Activated CD4-positive, alpha-beta T cell treated with anti-CD3 and anti-CD28 coated beads for 36 hours (primary cell): ENCODE measurements at regions of chr19 and their contacts with region 1.

Region 1: DNA sequence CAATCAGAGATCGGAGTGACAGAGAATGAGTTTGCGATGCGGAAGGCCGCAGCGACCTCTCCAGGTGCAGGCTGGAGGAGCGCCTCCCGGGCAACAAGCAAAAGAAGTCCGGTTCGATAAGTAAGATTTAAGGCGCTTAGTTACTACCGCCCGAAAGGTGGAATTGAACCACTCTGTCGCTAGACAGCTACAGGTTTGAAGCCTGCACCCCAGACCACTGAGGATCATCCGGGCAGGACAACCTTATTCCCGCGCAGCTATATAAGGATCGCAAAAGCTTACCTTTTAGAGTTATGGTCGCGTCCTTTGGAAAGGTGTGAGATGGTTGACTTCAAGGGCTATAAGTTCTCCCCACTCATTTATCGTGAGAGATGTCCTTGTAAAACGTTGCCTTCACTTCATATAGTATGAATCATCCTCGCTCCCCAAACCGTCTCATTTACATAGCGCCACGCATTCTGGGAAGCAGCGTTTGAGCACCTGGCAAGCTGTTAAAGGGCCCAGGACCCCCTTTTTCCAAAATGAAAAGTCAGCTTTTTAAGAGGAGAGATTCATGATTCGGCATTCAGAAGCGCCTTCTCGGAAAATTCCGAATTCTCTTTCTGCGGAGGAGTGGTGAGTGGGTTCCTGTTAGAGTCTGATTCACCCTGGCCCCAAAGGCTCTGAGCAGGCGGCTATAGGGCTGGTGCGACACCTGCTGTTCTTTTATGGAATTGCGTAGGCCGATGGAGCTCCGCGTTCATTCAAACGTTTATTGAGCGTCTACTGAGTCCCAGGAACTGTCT is 10.8 kb downstream of the FOSB start:
- DNase-seq: peak; percentile 95
- ATAC-seq: peak; percentile 86
- H3K4me3 Mint-ChIP-seq: peak overlapping the region; percentile 60
- H3K27ac Mint-ChIP-seq: peak overlapping the region; percentile 73
- H3K4me1 Mint-ChIP-seq: peaks cover 24% of the 10 kb centered on the region
- H3K27me3 Mint-ChIP-seq: peaks cover 4% of the 10 kb centered on the region

Region 2: GRCh38 chr19:45450012-45450333 is 28.7 kb before region 1 on chr19:
- CTCF ChIA-PET with region 1: interaction called, 22 read pairs
- POLR2A ChIA-PET with region 1: no interaction called
- intact Hi-C with region 1: loop called in 1 of 2 experiments (anchors 1 kb)
- DNase-seq: no peak
- ATAC-seq: peak; percentile 24
- H3K4me3 Mint-ChIP-seq: peak overlapping the region; percentile 95
- H3K27ac Mint-ChIP-seq: peak overlapping the region; percentile 97
- H3K4me1 Mint-ChIP-seq: peaks cover 34% of the 10 kb centered on the region
- H3K27me3 Mint-ChIP-seq: no peaks in the 10 kb centered on the region